ENCODE measurements at regions of chrX and their contacts with region 1.

Region 1: DNA sequence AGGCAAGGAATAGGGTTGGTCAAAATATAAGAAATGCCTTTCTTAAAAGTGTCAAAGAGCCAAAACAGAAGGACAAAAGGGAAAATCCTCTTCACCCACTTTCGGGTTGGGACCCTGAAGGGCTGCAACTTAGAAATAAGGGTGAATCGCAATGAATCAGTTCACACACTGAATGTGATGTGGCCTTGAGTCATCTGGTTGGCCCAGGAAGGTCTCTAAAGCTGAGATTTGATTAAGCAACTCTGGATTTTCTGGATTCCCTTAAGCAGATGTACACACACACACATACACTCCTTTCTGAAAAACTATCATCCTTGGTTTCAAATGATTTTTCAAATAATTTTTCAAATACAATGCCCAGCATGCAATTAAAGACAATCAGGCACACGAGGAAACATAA is 13.1 kb downstream of the TAB3 start:
- DNase-seq: no peak
- ATAC-seq: no peak
- H3K4me3 ChIP-seq: no peak overlapping the region
- H3K27ac ChIP-seq: no peak overlapping the region
- H3K4me1 ChIP-seq: no peaks in the 10 kb centered on the region
- H3K27me3 ChIP-seq: no peaks in the 10 kb centered on the region
- CTCF ChIP-seq: no peak

Region 2: DNA sequence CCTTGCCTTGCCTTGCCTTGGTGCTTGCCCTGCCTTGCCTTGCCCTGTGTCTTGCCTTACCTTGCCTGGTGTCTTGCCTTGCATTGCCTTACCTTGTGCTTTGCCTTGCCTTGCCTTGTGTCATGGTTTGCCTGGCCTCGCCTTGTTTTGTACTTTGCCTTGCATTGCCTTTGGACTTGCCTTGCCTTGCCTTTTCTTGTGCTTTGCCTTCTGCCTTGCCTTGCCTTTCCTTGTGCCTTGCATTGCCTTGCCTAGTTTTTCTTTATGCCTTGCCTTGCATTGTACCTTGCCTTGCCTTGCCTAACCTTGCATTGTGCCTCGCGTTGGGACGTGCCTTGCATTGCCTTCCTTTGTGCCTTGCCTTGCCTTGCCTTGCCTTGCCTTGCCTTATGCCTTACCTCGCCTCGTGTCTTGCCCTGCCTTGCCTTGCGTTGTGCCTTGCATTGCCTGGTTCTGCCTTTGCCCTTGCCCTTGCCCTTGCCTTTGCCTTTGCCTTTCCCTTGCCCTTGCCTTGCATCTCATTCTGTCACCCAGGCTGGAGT is 69.7 kb before region 1 on chrX:
- intact Hi-C with region 1: loop called in 1 of 2 experiments (anchors 2 kb)
- DNase-seq: no peak
- ATAC-seq: no peak
- H3K4me3 ChIP-seq: no peak overlapping the region
- H3K27ac ChIP-seq: no peak overlapping the region
- H3K4me1 ChIP-seq: no peaks in the 10 kb centered on the region
- H3K27me3 ChIP-seq: peaks cover 0 to 11% (median 0%) of the 10 kb centered on the region in 3 donors
- CTCF ChIP-seq: no peak

Region 3: GRCh38 chrX:32678487-32678886 is 1802.5 kb after region 1 on chrX:
- intact Hi-C with region 1: loop called in 1 of 2 experiments (anchors 5 kb)
- DNase-seq: no peak
- ATAC-seq: peak in 2 of 4 donors; percentile 51 to 76
- H3K4me3 ChIP-seq: no peak overlapping the region
- H3K27ac ChIP-seq: no peak overlapping the region
- H3K4me1 ChIP-seq: peaks cover 2% of the 10 kb centered on the region
- H3K27me3 ChIP-seq: no peaks in the 10 kb centered on the region
- CTCF ChIP-seq: no peak

Measured in psoas muscle (tissue), 8 donors.